Activated naive CD4-positive, alpha-beta T cell treated with anti-CD3 and anti-CD28 coated beads, Interleukin-2, amount 10 ng/mL, durations not matched to agents 7 days and 5 days (primary cell): ENCODE measurements at regions of chr19 and their contacts with region 1.

Region 1: DNA sequence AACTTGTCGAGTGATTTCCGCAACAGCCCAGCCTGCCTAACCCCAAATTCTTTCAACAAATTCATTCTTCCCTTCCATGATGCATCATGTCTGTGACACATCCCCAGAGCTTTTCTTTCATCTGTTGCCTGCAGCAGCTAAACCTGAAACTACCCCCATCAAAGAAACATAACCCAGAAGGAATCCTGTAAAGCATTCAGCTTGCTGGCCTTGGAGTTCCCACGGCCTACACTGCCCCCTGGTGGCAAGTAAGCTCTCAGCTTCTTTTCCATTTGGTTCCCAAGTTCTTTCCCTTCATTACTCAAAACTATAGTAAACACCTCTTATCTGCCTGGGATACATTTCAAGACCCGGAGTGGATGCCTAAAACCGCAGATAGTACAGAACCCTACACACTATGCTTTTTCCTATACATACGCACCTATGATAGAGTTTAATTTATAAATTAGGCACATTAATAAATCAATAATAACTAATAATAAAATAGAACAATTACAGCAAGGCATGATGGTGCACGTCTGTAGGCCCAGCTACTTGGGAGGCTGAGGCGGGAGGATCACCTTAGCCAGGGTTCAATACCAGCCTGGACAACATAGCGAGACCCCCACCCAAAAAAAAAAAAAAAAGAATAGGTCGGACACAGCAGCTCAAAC is 7.4 kb downstream of the ETHE1 start:
- DNase-seq: peak; percentile 86
- H3K4me3 Mint-ChIP-seq: no peak overlapping the region
- H3K27ac Mint-ChIP-seq: peak overlapping the region; percentile 62
- H3K4me1 Mint-ChIP-seq: peaks cover 18% of the 10 kb centered on the region
- H3K27me3 Mint-ChIP-seq: no peaks in the 10 kb centered on the region

Region 2: DNA sequence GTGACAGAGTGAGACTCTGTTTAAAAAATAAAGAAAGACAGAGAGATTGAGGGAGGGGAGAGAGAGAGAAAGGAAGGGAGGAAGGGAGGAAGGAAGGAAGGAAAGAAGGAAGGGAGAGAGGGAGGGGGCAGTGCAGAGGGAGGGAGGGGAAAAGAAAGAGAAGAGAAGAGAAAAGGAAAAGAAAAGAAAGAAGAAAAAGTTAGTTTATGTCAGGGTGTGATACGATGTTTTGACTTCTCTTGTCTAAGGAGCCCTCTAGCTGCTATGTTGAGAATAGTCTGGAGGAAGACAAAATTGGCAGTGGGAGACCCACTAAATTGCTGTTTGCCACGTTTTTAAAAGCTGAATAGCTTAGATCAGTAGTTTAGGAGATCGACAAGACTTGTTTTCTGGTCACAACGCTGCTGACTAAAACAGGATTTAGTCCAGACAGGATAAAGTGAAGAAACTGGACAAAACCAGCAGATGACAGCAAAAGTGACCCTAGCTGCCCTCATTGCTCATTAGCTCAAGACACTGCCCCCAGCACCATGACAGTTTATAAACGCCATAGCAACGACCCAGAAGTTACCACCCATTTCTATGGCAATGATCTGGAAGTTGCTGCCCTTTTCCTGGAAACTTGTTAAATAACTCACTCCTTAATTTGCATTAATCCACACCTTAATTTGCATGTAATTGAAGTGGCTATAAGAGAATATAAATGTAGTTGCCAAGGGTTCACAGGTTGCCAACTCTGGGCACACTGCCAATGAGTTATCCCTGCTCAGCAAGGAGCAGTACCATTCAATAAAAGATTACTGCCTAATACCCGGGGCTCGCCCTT is 93.8 kb before region 1 on chr19:
- CTCF ChIA-PET with region 1: interaction called, 84 read pairs
- DNase-seq: no peak
- H3K4me3 Mint-ChIP-seq: no peak overlapping the region
- H3K27ac Mint-ChIP-seq: no peak overlapping the region
- H3K4me1 Mint-ChIP-seq: peaks cover 15% of the 10 kb centered on the region
- H3K27me3 Mint-ChIP-seq: peaks cover 14% of the 10 kb centered on the region

Region 3: DNA sequence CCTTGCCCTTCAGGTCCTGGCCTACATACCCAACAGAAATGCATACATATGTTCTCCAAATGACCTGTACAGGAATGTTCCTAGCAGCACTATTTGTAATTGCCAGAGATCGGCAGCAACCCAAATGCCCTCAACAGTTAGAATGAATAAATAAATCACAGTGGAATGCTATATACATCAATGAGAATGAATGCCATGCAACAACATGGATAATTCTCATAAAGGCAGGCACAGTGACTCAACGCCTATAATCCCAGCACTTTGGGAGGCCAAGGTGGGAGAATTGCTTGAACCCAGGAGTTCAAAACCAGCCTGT is 86.2 kb before region 1 on chr19:
- CTCF ChIA-PET with region 1: interaction called, 84 read pairs
- DNase-seq: no peak
- H3K4me3 Mint-ChIP-seq: no peak overlapping the region
- H3K27ac Mint-ChIP-seq: no peak overlapping the region
- H3K4me1 Mint-ChIP-seq: peaks cover 50% of the 10 kb centered on the region
- H3K27me3 Mint-ChIP-seq: peaks cover 3% of the 10 kb centered on the region

Region 4: GRCh38 chr19:43438291-43439096 is 81.1 kb before region 1 on chr19:
- CTCF ChIA-PET with region 1: interaction called, 84 read pairs
- DNase-seq: peak; percentile 28
- H3K4me3 Mint-ChIP-seq: peak overlapping the region; percentile 26
- H3K27ac Mint-ChIP-seq: peak overlapping the region; percentile 97
- H3K4me1 Mint-ChIP-seq: peaks cover 62% of the 10 kb centered on the region
- H3K27me3 Mint-ChIP-seq: peaks cover 3% of the 10 kb centered on the region

Region 5: GRCh38 chr19:43463381-43464136 is 56.0 kb before region 1 on chr19:
- CTCF ChIA-PET with region 1: interaction called, 15 read pairs
- DNase-seq: peak; percentile 100
- H3K4me3 Mint-ChIP-seq: peak overlapping the region; percentile 79
- H3K27ac Mint-ChIP-seq: peak overlapping the region; percentile 98
- H3K4me1 Mint-ChIP-seq: peaks cover 42% of the 10 kb centered on the region
- H3K27me3 Mint-ChIP-seq: peaks cover 19% of the 10 kb centered on the region

Region 6: DNA sequence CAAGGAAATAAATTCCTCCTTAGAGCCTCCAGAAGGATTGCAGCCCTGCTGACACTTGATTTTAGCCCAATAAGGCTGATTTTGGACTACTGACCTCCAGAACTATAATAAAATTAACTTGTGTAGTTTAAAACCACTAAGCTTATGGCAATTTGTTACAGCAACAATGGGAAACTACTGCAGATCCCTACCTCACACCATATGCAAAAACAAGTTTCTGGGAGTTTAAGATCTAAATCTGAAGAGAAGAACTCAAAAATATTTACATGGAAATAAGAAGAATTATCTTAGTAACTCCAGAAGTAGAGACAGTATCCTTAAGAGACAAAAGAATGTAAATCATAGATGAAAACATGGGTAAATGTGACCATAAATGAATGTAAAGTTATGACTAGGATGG is 19.4 kb after region 1 on chr19:
- CTCF ChIA-PET with region 1: interaction called, 12 read pairs
- DNase-seq: no peak
- H3K4me3 Mint-ChIP-seq: no peak overlapping the region
- H3K27ac Mint-ChIP-seq: no peak overlapping the region
- H3K4me1 Mint-ChIP-seq: peaks cover 7% of the 10 kb centered on the region
- H3K27me3 Mint-ChIP-seq: no peaks in the 10 kb centered on the region

Region 7: DNA sequence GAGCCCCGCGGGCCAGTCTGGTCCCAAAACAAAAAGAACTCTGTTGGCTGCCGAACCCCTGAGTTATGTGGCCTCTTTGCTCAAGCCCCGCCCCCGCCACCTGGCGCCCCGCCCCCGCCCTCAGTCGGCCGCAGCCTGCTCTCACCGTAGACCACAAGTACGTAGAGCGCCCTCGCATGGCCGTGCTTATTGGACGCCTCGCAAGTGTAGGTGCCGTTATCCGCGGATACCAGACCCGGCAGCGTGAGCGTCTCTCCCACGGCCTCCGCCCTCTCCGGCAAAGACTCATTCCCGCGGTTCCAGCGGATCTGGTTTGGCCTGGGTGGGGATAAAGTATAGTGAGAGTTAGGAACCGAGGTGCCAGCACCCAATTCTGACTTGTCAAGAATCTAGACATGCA is 105.4 kb after region 1 on chr19:
- CTCF ChIA-PET with region 1: no interaction called
- DNase-seq: peak; percentile 93
- H3K4me3 Mint-ChIP-seq: no peak overlapping the region
- H3K27ac Mint-ChIP-seq: peak overlapping the region; percentile 37
- H3K4me1 Mint-ChIP-seq: peaks cover 49% of the 10 kb centered on the region
- H3K27me3 Mint-ChIP-seq: peaks cover 27% of the 10 kb centered on the region